ENCODE measurements at regions of chr19 and their contacts with region 1.

Region 1: GRCh38 chr19:56572589-56572988 is 5.3 kb downstream of the ZNF470 start:
- DNase-seq: no peak
- H3K4me3 ChIP-seq: no peak overlapping the region
- H3K27ac ChIP-seq: no peak overlapping the region
- H3K27me3 ChIP-seq: no peaks in the 10 kb centered on the region
- CTCF ChIP-seq: no peak

Region 2: GRCh38 chr19:56554272-56554869 is 18.2 kb before region 1 on chr19:
- CTCF ChIA-PET with region 1: interaction called, 10 read pairs
- POLR2A ChIA-PET with region 1: no interaction called
- DNase-seq: no peak
- H3K4me3 ChIP-seq: no peak overlapping the region
- H3K27ac ChIP-seq: no peak overlapping the region
- H3K27me3 ChIP-seq: no peaks in the 10 kb centered on the region
- CTCF ChIP-seq: no peak

Region 3: GRCh38 chr19:56689198-56689597 is 116.6 kb after region 1 on chr19:
- CTCF ChIA-PET with region 1: no interaction called
- POLR2A ChIA-PET with region 1: no interaction called
- DNase-seq: no peak
- H3K4me3 ChIP-seq: no peak overlapping the region
- H3K27ac ChIP-seq: no peak overlapping the region
- H3K27me3 ChIP-seq: no peaks in the 10 kb centered on the region
- CTCF ChIP-seq: no peak

Measured in AG04450 (cell line).